MCF 10A (cell line): ENCODE measurements at regions of chr12 and their contacts with region 1.

Region 1: GRCh38 chr12:26318661-26319068 is 123.3 kb downstream of the SSPN start:
- DNase-seq: peak; percentile 88
- H3K4me3 Mint-ChIP-seq: peak overlapping the region; percentile 53
- H3K27ac Mint-ChIP-seq: peak overlapping the region; percentile 89
- H3K4me1 Mint-ChIP-seq: peaks cover 32% of the 10 kb centered on the region
- H3K27me3 Mint-ChIP-seq: no peaks in the 10 kb centered on the region
- CTCF ChIP-seq: no peak

Region 2: GRCh38 chr12:26119391-26119981 is 199.2 kb before region 1 on chr12:
- CTCF ChIA-PET with region 1: interaction called, 10 read pairs
- POLR2A ChIA-PET with region 1: interaction called, 72 read pairs
- intact Hi-C with region 1: loop called (anchors 1 kb)
- DNase-seq: peak; percentile 64
- H3K4me3 Mint-ChIP-seq: no peak overlapping the region
- H3K27ac Mint-ChIP-seq: no peak overlapping the region
- H3K4me1 Mint-ChIP-seq: peaks cover 22% of the 10 kb centered on the region
- H3K27me3 Mint-ChIP-seq: peaks cover 4% of the 10 kb centered on the region
- CTCF ChIP-seq: peak; percentile 63

Region 3: GRCh38 chr12:26226629-26227360 is 91.9 kb before region 1 on chr12:
- CTCF ChIA-PET with region 1: interaction called, 3 read pairs
- POLR2A ChIA-PET with region 1: interaction called, 10 read pairs
- intact Hi-C with region 1: loop called (anchors 10 kb)
- DNase-seq: peak; percentile 34
- H3K4me3 Mint-ChIP-seq: peak overlapping the region; percentile 68
- H3K27ac Mint-ChIP-seq: no peak overlapping the region
- H3K4me1 Mint-ChIP-seq: no peaks in the 10 kb centered on the region
- H3K27me3 Mint-ChIP-seq: no peaks in the 10 kb centered on the region
- CTCF ChIP-seq: no peak

Region 4: GRCh38 chr12:26264215-26264838 is 54.3 kb before region 1 on chr12:
- CTCF ChIA-PET with region 1: interaction called, 12 read pairs
- POLR2A ChIA-PET with region 1: interaction called, 29 read pairs
- intact Hi-C with region 1: no loop called
- DNase-seq: peak; percentile 31
- H3K4me3 Mint-ChIP-seq: no peak overlapping the region
- H3K27ac Mint-ChIP-seq: no peak overlapping the region
- H3K4me1 Mint-ChIP-seq: no peaks in the 10 kb centered on the region
- H3K27me3 Mint-ChIP-seq: no peaks in the 10 kb centered on the region
- CTCF ChIP-seq: no peak

Region 5: DNA sequence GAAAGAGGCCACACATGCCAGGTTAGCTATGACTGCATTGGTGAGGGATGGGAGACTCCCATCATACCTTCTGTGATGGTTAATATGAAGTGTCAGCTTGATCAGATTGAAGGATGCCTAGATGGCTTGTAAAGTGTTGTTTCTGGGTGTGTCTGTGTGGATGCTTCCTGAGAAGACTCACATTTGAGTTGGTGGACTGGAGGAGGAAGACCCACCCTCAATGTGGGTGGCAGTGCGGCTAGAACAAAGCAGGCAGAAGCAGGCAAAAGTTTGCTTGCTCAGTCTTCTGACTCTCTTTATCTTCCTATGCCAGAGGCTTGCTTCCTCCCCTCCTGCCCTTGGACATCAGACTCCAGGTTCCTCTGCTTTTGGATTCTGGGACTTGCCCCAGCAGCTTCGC is 35.0 kb before region 1 on chr12:
- CTCF ChIA-PET with region 1: no interaction called
- POLR2A ChIA-PET with region 1: no interaction called
- intact Hi-C with region 1: no loop called
- DNase-seq: no peak
- H3K4me3 Mint-ChIP-seq: no peak overlapping the region
- H3K27ac Mint-ChIP-seq: no peak overlapping the region
- H3K4me1 Mint-ChIP-seq: peaks cover 19% of the 10 kb centered on the region
- H3K27me3 Mint-ChIP-seq: no peaks in the 10 kb centered on the region
- CTCF ChIP-seq: no peak

Region 6: GRCh38 chr12:26298785-26299621 is 19.7 kb before region 1 on chr12:
- CTCF ChIA-PET with region 1: interaction called, 8 read pairs
- POLR2A ChIA-PET with region 1: interaction called, 32 read pairs
- intact Hi-C with region 1: loop called (anchors 1 kb)
- DNase-seq: peak; percentile 82
- H3K4me3 Mint-ChIP-seq: peak overlapping the region; percentile 61
- H3K27ac Mint-ChIP-seq: peak overlapping the region; percentile 76
- H3K4me1 Mint-ChIP-seq: peaks cover 8% of the 10 kb centered on the region
- H3K27me3 Mint-ChIP-seq: no peaks in the 10 kb centered on the region
- CTCF ChIP-seq: peak; percentile 36

Region 7: GRCh38 chr12:26555139-26555538 is 236.5 kb after region 1 on chr12:
- CTCF ChIA-PET with region 1: no interaction called
- POLR2A ChIA-PET with region 1: no interaction called
- intact Hi-C with region 1: no loop called
- DNase-seq: peak; percentile 10
- H3K4me3 Mint-ChIP-seq: no peak overlapping the region
- H3K27ac Mint-ChIP-seq: no peak overlapping the region
- H3K4me1 Mint-ChIP-seq: no peaks in the 10 kb centered on the region
- H3K27me3 Mint-ChIP-seq: no peaks in the 10 kb centered on the region
- CTCF ChIP-seq: no peak